ENCODE measurements at regions of chr16 and their contacts with region 1.

Region 1: GRCh38 chr16:19502395-19503131 is 19.3 kb downstream of the GDE1 start:
- DNase-seq: peak; percentile 79
- ATAC-seq: peak; percentile 61
- H3K4me3 Mint-ChIP-seq: no peak overlapping the region
- H3K27ac Mint-ChIP-seq: no peak overlapping the region
- H3K4me1 Mint-ChIP-seq: no peaks in the 10 kb centered on the region
- H3K27me3 Mint-ChIP-seq: no peaks in the 10 kb centered on the region
- CTCF ChIP-seq: peak; percentile 63

Region 2: GRCh38 chr16:19389246-19389645 is 113.3 kb before region 1 on chr16:
- CTCF ChIA-PET with region 1: interaction called, 32 read pairs
- POLR2A ChIA-PET with region 1: interaction called, 3 read pairs
- DNase-seq: peak; percentile 86
- ATAC-seq: peak; percentile 100
- H3K4me3 Mint-ChIP-seq: no peak overlapping the region
- H3K27ac Mint-ChIP-seq: no peak overlapping the region
- H3K4me1 Mint-ChIP-seq: peaks cover 12% of the 10 kb centered on the region
- H3K27me3 Mint-ChIP-seq: no peaks in the 10 kb centered on the region
- CTCF ChIP-seq: peak; percentile 61

Region 3: GRCh38 chr16:19410435-19411161 is 92.0 kb before region 1 on chr16:
- CTCF ChIA-PET with region 1: interaction called, 10 read pairs
- POLR2A ChIA-PET with region 1: no interaction called
- DNase-seq: peak; percentile 80
- ATAC-seq: peak; percentile 78
- H3K4me3 Mint-ChIP-seq: peak overlapping the region; percentile 77
- H3K27ac Mint-ChIP-seq: peak overlapping the region; percentile 69
- H3K4me1 Mint-ChIP-seq: peaks cover 37% of the 10 kb centered on the region
- H3K27me3 Mint-ChIP-seq: peaks cover 24% of the 10 kb centered on the region
- CTCF ChIP-seq: no peak

Region 4: GRCh38 chr16:19446300-19446846 is 56.2 kb before region 1 on chr16:
- CTCF ChIA-PET with region 1: interaction called, 23 read pairs
- POLR2A ChIA-PET with region 1: no interaction called
- DNase-seq: no peak
- ATAC-seq: no peak
- H3K4me3 Mint-ChIP-seq: no peak overlapping the region
- H3K27ac Mint-ChIP-seq: no peak overlapping the region
- H3K4me1 Mint-ChIP-seq: 0 out of 2 replicates have a peak, but pooled peaks cover 3% of the 10 kb centered on the region
- H3K27me3 Mint-ChIP-seq: no peaks in the 10 kb centered on the region
- CTCF ChIP-seq: no peak

Region 5: DNA sequence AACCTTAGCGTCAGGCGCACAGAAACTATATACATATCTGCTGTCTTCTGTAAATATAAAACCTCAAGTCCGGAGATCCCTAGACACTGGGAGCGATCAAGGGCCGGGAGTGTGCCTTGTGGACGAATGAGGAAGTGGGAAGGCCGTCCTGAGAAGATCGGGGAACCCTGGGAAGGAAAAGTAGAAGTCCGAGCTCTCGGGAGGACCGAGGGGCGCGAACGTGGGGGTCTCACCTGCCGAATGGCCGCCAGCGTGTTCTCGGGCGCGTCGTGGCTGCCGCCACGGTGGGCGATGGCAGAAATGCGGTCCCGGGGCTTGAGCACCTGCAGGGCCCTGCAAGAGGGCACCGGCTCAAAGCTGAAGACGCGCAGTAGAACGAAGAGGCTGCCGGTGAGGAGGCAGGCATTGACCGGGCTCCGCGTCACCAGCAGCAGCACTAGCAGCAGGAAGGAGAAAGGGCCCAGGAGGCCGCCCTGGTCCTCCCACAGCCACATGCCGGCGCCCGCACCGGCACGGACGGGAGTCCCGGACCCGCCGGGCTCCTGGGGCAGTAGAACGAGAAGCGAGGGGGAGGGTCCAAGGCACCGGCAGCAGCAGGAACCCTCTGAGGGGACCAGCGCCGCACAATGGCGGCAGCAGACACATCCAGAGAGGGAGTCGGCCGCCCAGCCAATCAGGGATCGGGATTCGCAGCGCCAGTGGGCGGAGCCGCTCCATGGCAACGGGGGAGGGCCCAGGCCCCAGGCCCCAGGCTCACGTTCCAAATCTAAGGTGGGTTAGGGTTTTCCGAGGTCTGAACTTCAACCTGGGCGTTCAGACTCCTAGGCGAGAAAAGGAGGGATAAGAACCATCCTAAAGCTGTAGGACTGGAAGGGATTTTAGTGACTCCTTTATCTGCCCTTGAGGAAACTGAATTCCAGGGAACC is 19.2 kb after region 1 on chr16 and contains the start of gene GDE1:
- CTCF ChIA-PET with region 1: interaction called, 13 read pairs
- POLR2A ChIA-PET with region 1: interaction called, 3 read pairs
- DNase-seq: peak; percentile 98
- ATAC-seq: peak; percentile 84
- H3K4me3 Mint-ChIP-seq: peak within 1 kb of the TSS; percentile 93
- H3K27ac Mint-ChIP-seq: peak within 1 kb of the TSS; percentile 94
- H3K4me1 Mint-ChIP-seq: peaks cover 46% of the 10 kb centered on the region
- H3K27me3 Mint-ChIP-seq: no peaks in the 10 kb centered on the region
- CTCF ChIP-seq: no peak
- total RNA-seq, gene GDE1: 58.3 to 65.7 TPM (median 60.6 TPM) in 3 replicates

Measured in WTC11 (cell line).